ENCODE measurements at regions of chr19 and their contacts with region 1.

Region 1: DNA sequence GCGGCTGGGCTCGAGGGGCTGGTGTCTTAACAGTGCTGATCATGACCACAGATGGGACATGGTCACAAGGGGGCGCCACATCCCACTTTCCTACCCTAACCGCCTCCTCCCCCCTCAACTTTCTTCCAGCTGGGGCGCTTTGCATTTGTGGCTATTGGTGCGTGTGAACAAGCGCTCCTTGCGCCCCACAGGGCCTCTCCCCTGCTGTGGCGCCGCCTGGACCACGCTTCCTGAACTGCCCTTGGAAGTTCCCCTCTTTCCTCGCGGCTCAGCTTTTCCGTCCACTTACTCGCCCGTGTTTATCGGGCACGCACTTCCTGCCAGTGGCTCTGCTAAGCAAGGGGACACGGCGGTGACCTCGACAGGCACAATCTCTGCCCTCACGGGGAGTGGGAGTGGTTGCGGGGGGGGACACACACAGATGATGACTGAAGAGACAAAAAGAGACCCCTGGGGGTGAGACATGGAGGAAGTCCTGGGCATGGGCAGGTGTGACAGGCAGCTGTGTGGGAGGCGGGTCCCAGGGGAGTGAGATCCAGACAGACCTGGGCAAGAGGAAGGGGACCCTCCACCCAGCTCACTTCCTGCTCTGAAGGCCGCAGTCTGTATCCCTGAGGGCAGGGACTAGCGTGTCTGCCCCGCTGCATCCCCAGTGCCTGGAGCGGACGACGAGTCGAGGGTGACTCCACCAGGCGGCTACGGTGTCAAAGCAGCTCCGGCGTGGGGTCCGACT is 40.3 kb downstream of the ZNF787 start:
- H3K4me3 ChIP-seq: peak overlapping the region; percentile 28
- H3K27ac ChIP-seq: no peak overlapping the region
- H3K4me1 ChIP-seq: peaks cover 3% of the 10 kb centered on the region; the same call in 1 of the 2 replicates
- CTCF ChIP-seq: peak; percentile 18; the same call in 1 of the 2 replicates

Region 2: GRCh38 chr19:55670280-55671053 is 410.4 kb before region 1 on chr19:
- CTCF ChIA-PET with region 1: no interaction called
- POLR2A ChIA-PET with region 1: no interaction called
- H3K4me3 ChIP-seq: no peak overlapping the region
- H3K27ac ChIP-seq: peak overlapping the region; percentile 39; the same call in 1 of the 2 replicates
- H3K4me1 ChIP-seq: peaks cover 12% of the 10 kb centered on the region
- CTCF ChIP-seq: no peak

Region 3: GRCh38 chr19:56066152-56067023 is 14.4 kb before region 1 on chr19:
- CTCF ChIA-PET with region 1: interaction called, 30 read pairs
- POLR2A ChIA-PET with region 1: no interaction called
- H3K4me3 ChIP-seq: peak overlapping the region; percentile 37
- H3K27ac ChIP-seq: no peak overlapping the region
- H3K4me1 ChIP-seq: no peaks in the 10 kb centered on the region
- CTCF ChIP-seq: peak; percentile 73

Region 4: GRCh38 chr19:56090931-56091490 is 10.2 kb after region 1 on chr19:
- CTCF ChIA-PET with region 1: interaction called, 17 read pairs
- POLR2A ChIA-PET with region 1: no interaction called
- H3K4me3 ChIP-seq: no peak overlapping the region
- H3K27ac ChIP-seq: no peak overlapping the region
- H3K4me1 ChIP-seq: peaks cover 5% of the 10 kb centered on the region
- CTCF ChIP-seq: no peak

Region 5: GRCh38 chr19:56097306-56097705 is 16.5 kb after region 1 on chr19:
- CTCF ChIA-PET with region 1: interaction called, 15 read pairs
- POLR2A ChIA-PET with region 1: no interaction called
- H3K4me3 ChIP-seq: no peak overlapping the region
- H3K27ac ChIP-seq: no peak overlapping the region
- H3K4me1 ChIP-seq: no peaks in the 10 kb centered on the region
- CTCF ChIP-seq: no peak

Region 6: DNA sequence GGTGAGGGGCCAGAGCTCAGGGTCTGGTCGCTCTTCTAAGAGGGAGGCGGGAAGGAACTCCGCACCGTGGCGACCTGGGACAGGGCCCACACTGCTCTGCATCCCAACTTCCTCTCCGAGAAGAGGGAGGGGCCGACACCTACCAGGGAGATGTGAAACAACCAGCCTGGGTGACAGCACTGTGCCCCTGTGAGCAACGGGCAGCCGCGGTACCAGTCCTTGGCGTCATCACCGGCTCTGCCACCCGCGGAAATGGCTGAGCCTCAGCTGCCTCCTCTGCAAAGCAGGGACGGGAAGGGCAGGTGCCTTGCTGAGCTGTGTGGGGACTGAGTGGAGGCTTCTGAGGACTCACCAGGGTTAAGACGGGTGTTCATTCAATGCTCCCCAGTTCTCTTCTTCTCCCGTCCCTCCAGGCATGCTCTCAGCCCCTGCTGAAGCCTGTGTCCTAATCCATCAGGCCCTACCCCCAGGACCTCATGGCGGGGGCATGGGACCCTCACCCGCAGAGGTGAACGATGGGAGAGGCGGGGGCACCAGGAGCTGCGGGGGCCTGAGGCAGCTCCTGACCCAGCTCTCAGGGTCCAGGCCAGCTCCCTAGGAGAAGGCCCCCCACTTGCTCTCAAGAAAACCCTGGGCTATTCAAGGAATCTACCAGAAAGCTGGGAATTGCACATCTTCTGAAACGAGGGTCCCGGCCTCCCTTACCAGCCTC is 30.9 kb after region 1 on chr19:
- CTCF ChIA-PET with region 1: no interaction called
- POLR2A ChIA-PET with region 1: no interaction called
- H3K4me3 ChIP-seq: no peak overlapping the region
- H3K27ac ChIP-seq: no peak overlapping the region
- H3K4me1 ChIP-seq: peaks cover 22% of the 10 kb centered on the region
- CTCF ChIP-seq: no peak

Region 7: DNA sequence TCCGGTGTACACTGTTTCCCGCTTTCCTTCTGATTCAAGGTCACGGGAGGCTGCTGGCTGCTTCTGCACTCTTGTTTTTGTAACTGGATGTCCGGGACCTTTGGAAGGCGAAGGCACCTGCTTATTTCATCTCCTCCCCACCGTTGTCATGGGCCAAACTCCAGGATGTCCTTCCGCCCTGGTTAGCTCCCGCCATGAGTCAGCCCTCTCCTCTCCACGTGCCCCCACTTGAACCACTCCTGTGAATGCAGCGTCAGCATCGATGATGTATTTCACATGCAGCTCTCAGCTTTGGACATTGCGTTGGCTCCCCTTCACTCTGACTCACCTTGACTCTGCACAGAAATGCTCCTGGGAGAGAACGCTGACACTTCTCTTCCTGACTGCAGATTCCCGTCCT is 89.4 kb after region 1 on chr19:
- CTCF ChIA-PET with region 1: interaction called, 36 read pairs
- POLR2A ChIA-PET with region 1: no interaction called
- H3K4me3 ChIP-seq: no peak overlapping the region
- H3K27ac ChIP-seq: no peak overlapping the region
- H3K4me1 ChIP-seq: no peaks in the 10 kb centered on the region
- CTCF ChIP-seq: no peak

Region 8: GRCh38 chr19:56333505-56333904 is 252.7 kb after region 1 on chr19:
- CTCF ChIA-PET with region 1: interaction called, 74 read pairs
- POLR2A ChIA-PET with region 1: no interaction called
- H3K4me3 ChIP-seq: no peak overlapping the region
- H3K27ac ChIP-seq: no peak overlapping the region
- H3K4me1 ChIP-seq: no peaks in the 10 kb centered on the region
- CTCF ChIP-seq: no peak

Measured in HEK293 (cell line).